ENCODE measurements at regions of chr6 and their contacts with region 1.

Region 1: GRCh38 chr6:7129784-7130569 is 22.2 kb downstream of the RREB1 start:
- DNase-seq: peak; percentile 74
- H3K4me3 Mint-ChIP-seq: no peak overlapping the region
- H3K27ac Mint-ChIP-seq: peak overlapping the region; percentile 50
- H3K4me1 Mint-ChIP-seq: peaks cover 80% of the 10 kb centered on the region
- H3K27me3 Mint-ChIP-seq: no peaks in the 10 kb centered on the region

Region 2: GRCh38 chr6:7042056-7042653 is 87.8 kb before region 1 on chr6:
- CTCF ChIA-PET with region 1: no interaction called
- intact Hi-C with region 1: no loop called
- DNase-seq: no peak
- H3K4me3 Mint-ChIP-seq: no peak overlapping the region
- H3K27ac Mint-ChIP-seq: no peak overlapping the region
- H3K4me1 Mint-ChIP-seq: peaks cover 13% of the 10 kb centered on the region
- H3K27me3 Mint-ChIP-seq: no peaks in the 10 kb centered on the region

Region 3: DNA sequence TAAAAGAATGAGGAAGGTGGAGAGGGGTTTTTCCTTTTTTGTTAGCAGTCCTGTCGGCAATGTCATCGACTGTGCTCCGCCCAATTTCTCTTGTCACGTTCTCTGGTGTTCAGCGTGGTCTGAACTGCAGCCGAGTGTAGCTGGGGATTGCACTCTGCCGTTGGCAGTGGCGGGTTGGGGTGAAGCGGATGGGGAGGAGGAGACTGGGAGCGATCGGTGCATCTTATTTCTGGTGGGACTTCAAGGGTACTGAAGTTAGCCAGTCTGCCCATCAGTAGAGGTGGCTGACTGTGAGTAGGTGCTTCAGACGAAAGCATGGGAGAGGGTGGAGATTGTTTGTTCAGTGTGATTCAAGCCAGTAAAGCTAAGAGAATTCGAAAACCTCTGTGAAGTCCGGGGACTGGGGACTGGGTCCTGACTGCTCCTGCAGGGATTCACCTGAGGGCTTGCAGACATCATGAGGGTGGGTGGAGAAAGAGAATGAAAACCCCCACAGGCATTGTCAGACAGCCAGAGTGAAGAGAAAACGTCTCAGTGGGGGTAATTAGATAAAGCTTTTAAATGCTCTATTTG is 17.1 kb before region 1 on chr6:
- CTCF ChIA-PET with region 1: interaction called, 10 read pairs
- intact Hi-C with region 1: loop called (anchors 1 kb)
- DNase-seq: peak; percentile 72
- H3K4me3 Mint-ChIP-seq: peak overlapping the region; percentile 73
- H3K27ac Mint-ChIP-seq: peak overlapping the region; percentile 51
- H3K4me1 Mint-ChIP-seq: peaks cover 74% of the 10 kb centered on the region
- H3K27me3 Mint-ChIP-seq: no peaks in the 10 kb centered on the region